ENCODE measurements at regions of chr15 and their contacts with region 1.

Region 1: DNA sequence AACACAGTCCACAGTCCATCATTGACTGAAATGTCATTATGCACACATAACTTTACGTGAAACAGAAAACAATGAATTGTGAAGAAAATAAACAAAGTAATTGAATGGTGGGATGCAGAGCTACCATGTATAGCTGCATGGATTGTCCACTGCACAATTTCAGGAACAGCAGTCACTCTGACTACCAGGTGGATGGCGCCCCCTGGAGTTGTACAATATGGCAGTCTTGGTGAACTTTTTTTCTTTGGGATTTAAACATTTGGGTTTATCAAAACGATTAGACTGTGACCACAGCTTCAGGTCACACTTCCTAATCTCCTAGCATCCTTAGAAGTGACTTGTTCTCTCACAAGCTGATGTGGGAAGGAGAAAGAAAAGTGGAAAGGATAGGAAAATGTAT is 48.9 kb upstream of the TCF12 start:
- DNase-seq: no peak
- H3K4me3 Mint-ChIP-seq: no peak overlapping the region
- H3K27ac Mint-ChIP-seq: no peak overlapping the region
- H3K4me1 Mint-ChIP-seq: no peaks in the 10 kb centered on the region
- H3K27me3 Mint-ChIP-seq: peaks cover 9% of the 10 kb centered on the region

Region 2: GRCh38 chr15:56491110-56491722 is 378.4 kb before region 1 on chr15:
- intact Hi-C with region 1: loop called (anchors 1 kb)
- DNase-seq: peak; percentile 33
- H3K4me3 Mint-ChIP-seq: no peak overlapping the region
- H3K27ac Mint-ChIP-seq: no peak overlapping the region
- H3K4me1 Mint-ChIP-seq: peaks cover 6% of the 10 kb centered on the region
- H3K27me3 Mint-ChIP-seq: peaks cover 11% of the 10 kb centered on the region

Region 3: GRCh38 chr15:56496635-56497034 is 372.9 kb before region 1 on chr15:
- intact Hi-C with region 1: loop called (anchors 1 kb)
- DNase-seq: no peak
- H3K4me3 Mint-ChIP-seq: no peak overlapping the region
- H3K27ac Mint-ChIP-seq: no peak overlapping the region
- H3K4me1 Mint-ChIP-seq: peaks cover 10% of the 10 kb centered on the region
- H3K27me3 Mint-ChIP-seq: peaks cover 31% of the 10 kb centered on the region

Region 4: GRCh38 chr15:56835718-56836171 is 33.8 kb before region 1 on chr15:
- intact Hi-C with region 1: no loop called
- DNase-seq: no peak
- H3K4me3 Mint-ChIP-seq: no peak overlapping the region
- H3K27ac Mint-ChIP-seq: no peak overlapping the region
- H3K4me1 Mint-ChIP-seq: peaks cover 6% of the 10 kb centered on the region
- H3K27me3 Mint-ChIP-seq: peaks cover 8% of the 10 kb centered on the region

Measured in activated T-helper 2 cell treated with anti-CD3 and anti-CD28 coated beads, Interferon-gamma antibody, Interleukin-2, Interleukin-4, amounts not matched to agents 10 μg/mL and 5 μg/mL and 100 μg/mL, durations not matched to agents 14 hours and 24 hours and 36 hours (primary cell).